ENCODE measurements at regions of chr14 and their contacts with region 1.

Region 1: DNA sequence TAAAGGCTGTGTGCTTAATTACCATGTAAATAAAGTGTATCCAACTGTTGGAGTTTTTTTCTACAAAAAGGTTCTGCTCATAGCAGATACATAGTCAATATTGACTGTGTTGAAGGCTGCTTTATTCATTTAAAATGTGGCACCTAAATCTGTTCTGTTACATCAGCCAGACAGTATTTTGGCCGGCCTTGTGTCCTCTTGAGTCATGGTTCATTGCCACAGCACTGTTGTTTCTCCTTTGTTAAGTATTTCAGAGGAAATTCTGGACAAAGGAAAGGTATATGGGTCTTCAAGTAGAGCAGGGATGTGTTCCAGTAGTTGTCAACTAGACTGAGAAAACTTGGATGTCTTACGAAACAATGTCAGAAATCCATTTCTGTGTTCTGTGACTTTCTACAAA is 95.5 kb downstream of the SLC38A6 start:
- DNase-seq: peak; percentile 58
- H3K4me3 Mint-ChIP-seq: no peak overlapping the region
- H3K27ac Mint-ChIP-seq: peak overlapping the region; percentile 8
- H3K4me1 Mint-ChIP-seq: peaks cover 17% of the 10 kb centered on the region
- H3K27me3 Mint-ChIP-seq: no peaks in the 10 kb centered on the region
- CTCF ChIP-seq: no peak

Region 2: GRCh38 chr14:60999536-60999935 is 77.0 kb before region 1 on chr14:
- CTCF ChIA-PET with region 1: no interaction called
- POLR2A ChIA-PET with region 1: no interaction called
- intact Hi-C with region 1: no loop called
- DNase-seq: no peak
- H3K4me3 Mint-ChIP-seq: no peak overlapping the region
- H3K27ac Mint-ChIP-seq: no peak overlapping the region
- H3K4me1 Mint-ChIP-seq: peaks cover 5% of the 10 kb centered on the region
- H3K27me3 Mint-ChIP-seq: no peaks in the 10 kb centered on the region
- CTCF ChIP-seq: no peak

Region 3: DNA sequence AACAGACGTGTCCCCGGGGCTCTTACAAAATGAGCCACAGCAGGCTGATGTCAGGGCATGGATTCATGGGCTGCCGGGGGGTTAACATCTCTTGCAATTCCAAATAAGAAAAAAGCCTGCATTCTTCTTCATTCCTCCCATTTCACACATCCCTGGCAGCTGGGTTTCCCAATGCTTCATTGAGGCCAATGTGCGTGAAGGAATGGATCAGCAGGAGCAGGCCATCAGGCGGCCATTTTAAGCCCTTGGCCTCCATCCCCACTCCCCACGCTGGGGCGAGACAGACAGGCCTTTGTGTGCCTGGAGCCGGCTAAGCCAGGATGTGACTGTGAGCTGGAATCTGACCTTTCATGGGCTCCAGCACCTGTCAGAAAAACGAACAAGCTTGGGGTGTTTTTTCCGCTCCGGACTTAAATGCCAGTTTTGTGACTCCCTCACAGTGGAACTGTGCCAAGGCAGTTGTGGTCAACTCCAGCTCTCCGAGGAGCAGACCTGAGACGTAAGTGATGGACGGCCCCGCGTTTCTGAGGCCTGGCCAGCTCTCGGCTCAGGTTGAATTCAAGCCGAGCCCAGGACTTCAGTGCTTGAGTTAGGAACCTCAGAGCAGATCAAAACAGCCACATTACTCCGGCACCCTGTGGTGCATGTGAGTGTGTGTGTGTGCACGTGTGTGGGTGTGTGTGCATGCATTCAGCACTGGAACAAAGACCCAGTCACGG is 71.4 kb after region 1 on chr14:
- CTCF ChIA-PET with region 1: no interaction called
- POLR2A ChIA-PET with region 1: interaction called, 17 read pairs
- intact Hi-C with region 1: loop called (anchors 10 kb)
- DNase-seq: peak; percentile 91
- H3K4me3 Mint-ChIP-seq: peak overlapping the region; percentile 33
- H3K27ac Mint-ChIP-seq: peak overlapping the region; percentile 95
- H3K4me1 Mint-ChIP-seq: peaks cover 67% of the 10 kb centered on the region
- H3K27me3 Mint-ChIP-seq: no peaks in the 10 kb centered on the region
- CTCF ChIP-seq: no peak

Region 4: GRCh38 chr14:61395115-61395725 is 318.7 kb after region 1 on chr14:
- CTCF ChIA-PET with region 1: no interaction called
- POLR2A ChIA-PET with region 1: no interaction called
- intact Hi-C with region 1: no loop called
- DNase-seq: no peak
- H3K4me3 Mint-ChIP-seq: no peak overlapping the region
- H3K27ac Mint-ChIP-seq: no peak overlapping the region
- H3K4me1 Mint-ChIP-seq: peaks cover 5% of the 10 kb centered on the region
- H3K27me3 Mint-ChIP-seq: no peaks in the 10 kb centered on the region
- CTCF ChIP-seq: no peak